ENCODE measurements at regions of chr22 and their contacts with region 1.

Region 1: GRCh38 chr22:41501209-41501608 is 32.3 kb downstream of the ACO2 start:
- DNase-seq: peak; percentile 33
- H3K4me3 Mint-ChIP-seq: no peak overlapping the region
- H3K27ac Mint-ChIP-seq: no peak overlapping the region
- H3K4me1 Mint-ChIP-seq: no peaks in the 10 kb centered on the region
- H3K27me3 Mint-ChIP-seq: no peaks in the 10 kb centered on the region

Region 2: DNA sequence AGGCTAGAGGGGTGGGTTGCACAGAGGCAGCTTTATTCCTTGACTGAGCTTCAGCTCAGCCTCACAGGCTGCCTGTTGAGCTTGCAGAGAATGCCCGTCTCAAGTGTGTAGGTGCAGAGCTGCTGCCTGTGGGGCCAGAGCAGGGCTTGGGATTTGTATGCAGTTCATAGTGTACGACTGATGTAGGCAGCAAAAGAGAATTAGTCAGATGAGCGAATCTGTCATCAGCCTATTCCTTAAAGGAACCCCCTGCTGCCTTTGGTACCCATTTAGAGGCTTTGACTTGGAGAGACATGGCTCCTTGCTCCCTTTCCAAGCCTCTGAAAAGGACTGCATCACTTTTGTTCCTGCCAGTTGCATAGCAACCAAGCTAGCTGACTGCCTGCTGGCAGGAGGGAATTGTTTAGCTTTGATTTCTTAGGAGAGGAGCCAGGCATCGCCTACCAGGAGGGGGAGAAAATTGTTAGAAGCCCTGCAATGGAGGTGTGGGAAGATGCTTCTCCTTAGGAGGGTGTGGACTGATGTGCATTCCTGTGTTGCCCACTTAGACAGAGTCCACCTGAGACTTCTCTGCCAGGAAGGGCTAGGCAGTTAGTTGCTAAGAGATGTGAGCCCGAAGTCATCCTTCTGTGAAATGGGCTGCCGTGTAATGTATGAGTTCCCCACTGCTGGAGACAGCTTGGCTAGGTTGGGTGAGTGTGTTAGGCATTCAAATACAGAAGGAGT is 21.4 kb before region 1 on chr22:
- CTCF ChIA-PET with region 1: no interaction called
- POLR2A ChIA-PET with region 1: no interaction called
- intact Hi-C with region 1: no loop called
- DNase-seq: no peak
- H3K4me3 Mint-ChIP-seq: no peak overlapping the region
- H3K27ac Mint-ChIP-seq: no peak overlapping the region
- H3K4me1 Mint-ChIP-seq: peaks cover 33% of the 10 kb centered on the region
- H3K27me3 Mint-ChIP-seq: no peaks in the 10 kb centered on the region

Region 3: GRCh38 chr22:41517172-41518047 is 16.2 kb after region 1 on chr22:
- CTCF ChIA-PET with region 1: interaction called, 17 read pairs
- POLR2A ChIA-PET with region 1: no interaction called
- intact Hi-C with region 1: no loop called
- DNase-seq: peak; percentile 54
- H3K4me3 Mint-ChIP-seq: no peak overlapping the region
- H3K27ac Mint-ChIP-seq: peak overlapping the region; percentile 33
- H3K4me1 Mint-ChIP-seq: peaks cover 7% of the 10 kb centered on the region
- H3K27me3 Mint-ChIP-seq: no peaks in the 10 kb centered on the region

Region 4: GRCh38 chr22:41532908-41533825 is 32.0 kb after region 1 on chr22:
- CTCF ChIA-PET with region 1: no interaction called
- POLR2A ChIA-PET with region 1: no interaction called
- intact Hi-C with region 1: no loop called
- DNase-seq: peak; percentile 83
- H3K4me3 Mint-ChIP-seq: no peak overlapping the region
- H3K27ac Mint-ChIP-seq: no peak overlapping the region
- H3K4me1 Mint-ChIP-seq: peaks cover 3% of the 10 kb centered on the region
- H3K27me3 Mint-ChIP-seq: no peaks in the 10 kb centered on the region

Measured in activated CD4-positive, alpha-beta memory T cell treated with anti-CD3 and anti-CD28 coated beads for 36 hours (primary cell).